ENCODE measurements at regions of chr2 and their contacts with region 1.

Region 1: DNA sequence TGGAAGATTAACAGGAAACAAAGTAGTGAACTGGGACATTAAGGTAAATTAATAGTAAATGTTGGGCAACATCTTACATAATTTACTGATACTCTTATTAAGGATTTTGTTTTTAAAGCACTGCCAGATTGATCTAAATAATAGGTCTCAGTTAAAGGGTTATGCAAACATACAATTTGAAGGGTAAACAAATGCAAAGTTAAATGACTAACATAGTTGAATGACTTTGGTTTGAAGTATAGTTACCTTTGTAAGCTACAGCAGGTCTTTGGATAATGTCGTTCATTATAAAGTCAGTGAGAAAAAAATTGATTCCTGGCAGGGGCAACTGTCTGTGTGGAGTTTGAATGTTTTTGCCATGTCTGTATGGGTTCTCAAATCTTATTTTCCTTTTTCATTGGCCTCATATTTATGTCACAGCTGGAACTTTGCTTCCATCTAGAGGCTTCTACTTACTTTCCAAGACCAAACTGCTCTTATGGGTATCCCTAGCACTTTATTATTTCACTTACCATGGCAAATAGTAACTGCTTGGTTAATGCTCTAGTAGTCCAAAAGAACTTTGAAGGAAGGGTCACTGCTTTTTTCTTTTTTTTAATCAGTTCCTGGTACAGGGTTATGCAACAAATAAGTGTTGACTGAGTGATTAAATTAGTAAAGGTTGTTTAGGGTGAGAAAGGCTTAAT is 107.8 kb downstream of the NBEAL1 start:
- DNase-seq: no peak
- ATAC-seq: no peak
- H3K4me3 ChIP-seq: no peak overlapping the region
- H3K27ac ChIP-seq: no peak overlapping the region
- H3K4me1 ChIP-seq: no peaks in the 10 kb centered on the region
- H3K27me3 ChIP-seq: no peaks in the 10 kb centered on the region
- CTCF ChIP-seq: peak in 4 of 12 donors; percentile 12 to 29 (median 21)
- POLR2A ChIP-seq: no peak

Region 2: GRCh38 chr2:202577250-202578183 is 544.9 kb before region 1 on chr2:
- intact Hi-C with region 1: loop called in 1 of 10 experiments (anchors 10 kb)
- DNase-seq: no peak
- ATAC-seq: no peak
- H3K4me3 ChIP-seq: no peak overlapping the region
- H3K27ac ChIP-seq: no peak overlapping the region
- H3K4me1 ChIP-seq: no peaks in the 10 kb centered on the region
- H3K27me3 ChIP-seq: no peaks in the 10 kb centered on the region
- CTCF ChIP-seq: no peak
- POLR2A ChIP-seq: no peak

Region 3: GRCh38 chr2:202858575-202858974 is 263.9 kb before region 1 on chr2:
- intact Hi-C with region 1: no loop called
- DNase-seq: no peak
- ATAC-seq: no peak
- H3K4me3 ChIP-seq: no peak overlapping the region
- H3K27ac ChIP-seq: no peak overlapping the region
- H3K4me1 ChIP-seq: no peaks in the 10 kb centered on the region
- H3K27me3 ChIP-seq: no peaks in the 10 kb centered on the region
- CTCF ChIP-seq: no peak
- POLR2A ChIP-seq: no peak

Region 4: GRCh38 chr2:203022751-203023150 is 99.7 kb before region 1 on chr2:
- intact Hi-C with region 1: no loop called
- DNase-seq: no peak
- ATAC-seq: peak in 2 of 4 donors; percentile 67 to 78
- H3K4me3 ChIP-seq: peak overlapping the region in 5 of 12 donors; percentile 0 to 17 (median 1)
- H3K27ac ChIP-seq: peak overlapping the region; percentile 31 to 87 (median 66)
- H3K4me1 ChIP-seq: peaks cover 0 to 63% (median 39%) of the 10 kb centered on the region in 12 donors
- H3K27me3 ChIP-seq: no peaks in the 10 kb centered on the region
- CTCF ChIP-seq: no peak
- POLR2A ChIP-seq: no peak

Measured in heart left ventricle (tissue), 16 donors.